ENCODE measurements at regions of chr19 and their contacts with region 1.

Region 1: DNA sequence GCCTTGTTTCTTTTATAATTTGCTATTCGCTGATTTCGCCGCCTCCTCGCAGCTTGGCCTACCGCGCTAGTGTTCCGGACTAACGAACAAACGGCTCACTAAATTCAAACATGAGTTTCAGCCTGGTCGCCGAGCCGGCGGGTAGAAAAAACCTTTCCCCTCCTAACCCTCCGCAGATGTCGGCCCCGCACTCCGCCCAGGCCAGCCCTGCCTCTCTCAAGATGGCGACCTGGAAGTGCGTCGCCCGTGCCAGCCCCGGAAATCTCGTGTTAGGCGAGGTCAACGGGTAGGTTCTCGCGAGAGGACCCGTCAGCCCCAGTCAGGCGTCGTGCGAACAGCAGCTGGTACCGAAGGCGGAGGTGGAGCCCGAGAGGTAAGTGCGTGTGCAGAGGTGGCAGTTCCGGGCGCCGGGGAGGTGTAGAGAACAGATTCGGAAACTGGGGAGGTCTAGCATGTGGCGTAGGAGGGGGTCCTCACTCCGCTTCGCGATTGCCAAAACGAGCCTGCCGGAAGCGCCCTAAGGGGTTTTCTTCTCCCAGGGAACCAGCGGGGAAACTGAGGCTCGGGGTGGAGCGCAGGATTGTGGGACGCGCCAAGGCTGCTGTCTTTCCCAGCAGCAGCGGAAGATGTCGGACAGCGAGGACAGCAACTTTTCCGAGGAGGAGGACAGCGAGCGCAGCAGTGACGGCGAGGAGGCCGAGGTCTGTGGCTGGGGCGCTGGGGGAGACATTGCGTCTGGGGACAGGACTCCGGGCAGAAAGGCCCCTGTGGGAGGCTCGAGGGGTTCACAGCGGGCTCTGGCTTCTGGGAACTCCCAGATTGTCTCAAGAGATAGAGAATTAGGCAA is at the start of gene SUPT5H:
- DNase-seq: peak; percentile 97 to 98 (median 97)
- ATAC-seq: peak; percentile 98 to 99 (median 98)
- H3K4me3 ChIP-seq: peak within 1 kb of the TSS; percentile 65 to 98 (median 86)
- H3K27ac ChIP-seq: peak within 1 kb of the TSS; percentile 86 to 96 (median 92)
- H3K4me1 ChIP-seq: peaks cover 8 to 51% (median 36%) of the 10 kb centered on the region in 12 donors
- H3K27me3 ChIP-seq: no peaks in the 10 kb centered on the region
- CTCF ChIP-seq: peak in 1 of 12 donors; percentile 12
- POLR2A ChIP-seq: peak; percentile 34 to 91
- total RNA-seq, gene SUPT5H: 64.2 to 113 (median 81.7) TPM

Region 2: DNA sequence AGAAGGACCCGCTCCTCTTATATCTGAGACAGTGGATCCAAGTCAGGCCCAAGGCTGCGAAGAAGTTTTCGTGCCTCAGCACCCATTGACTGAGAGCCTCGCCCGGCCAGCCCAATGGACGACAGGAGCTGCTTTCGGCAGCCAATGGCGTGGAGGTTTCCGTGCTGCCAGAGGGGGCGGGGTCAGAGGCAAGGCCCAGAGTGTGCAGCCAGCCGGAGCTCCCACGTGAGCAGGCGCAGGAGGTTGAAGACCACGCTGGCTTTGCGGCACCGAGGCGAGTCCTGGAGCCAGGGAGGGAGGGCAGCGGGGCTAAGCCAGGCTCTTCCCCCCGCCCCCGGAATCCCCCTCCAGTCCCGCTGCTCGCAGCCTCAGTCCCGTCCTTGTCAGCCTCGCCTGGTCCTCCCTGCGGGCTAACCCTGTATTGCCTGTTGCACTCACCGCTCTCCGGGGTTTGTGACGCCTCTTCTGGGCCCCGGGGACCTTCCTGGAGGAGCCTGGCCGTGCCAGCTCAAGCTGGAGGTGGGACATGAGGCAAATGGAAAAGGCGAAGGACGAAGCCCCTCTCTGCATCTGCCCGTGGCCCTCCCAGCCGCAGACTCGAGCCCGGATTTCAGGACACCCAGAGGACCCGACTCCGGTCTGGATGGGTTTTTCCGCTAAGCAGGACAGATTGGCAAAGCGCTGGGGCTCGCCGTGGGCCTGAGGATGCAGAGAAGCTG is 198.4 kb before region 1 on chr19:
- intact Hi-C with region 1: no loop called
- DNase-seq: no peak
- ATAC-seq: peak in 2 of 4 donors; percentile 41 to 73
- H3K4me3 ChIP-seq: peak overlapping the region in 1 of 12 donors; percentile 18
- H3K27ac ChIP-seq: no peak overlapping the region
- H3K4me1 ChIP-seq: peaks cover 0 to 14% (median 1%) of the 10 kb centered on the region in 12 donors
- H3K27me3 ChIP-seq: peaks cover 19 to 68% (median 38%) of the 10 kb centered on the region in 9 donors
- CTCF ChIP-seq: no peak
- POLR2A ChIP-seq: no peak

Region 3: DNA sequence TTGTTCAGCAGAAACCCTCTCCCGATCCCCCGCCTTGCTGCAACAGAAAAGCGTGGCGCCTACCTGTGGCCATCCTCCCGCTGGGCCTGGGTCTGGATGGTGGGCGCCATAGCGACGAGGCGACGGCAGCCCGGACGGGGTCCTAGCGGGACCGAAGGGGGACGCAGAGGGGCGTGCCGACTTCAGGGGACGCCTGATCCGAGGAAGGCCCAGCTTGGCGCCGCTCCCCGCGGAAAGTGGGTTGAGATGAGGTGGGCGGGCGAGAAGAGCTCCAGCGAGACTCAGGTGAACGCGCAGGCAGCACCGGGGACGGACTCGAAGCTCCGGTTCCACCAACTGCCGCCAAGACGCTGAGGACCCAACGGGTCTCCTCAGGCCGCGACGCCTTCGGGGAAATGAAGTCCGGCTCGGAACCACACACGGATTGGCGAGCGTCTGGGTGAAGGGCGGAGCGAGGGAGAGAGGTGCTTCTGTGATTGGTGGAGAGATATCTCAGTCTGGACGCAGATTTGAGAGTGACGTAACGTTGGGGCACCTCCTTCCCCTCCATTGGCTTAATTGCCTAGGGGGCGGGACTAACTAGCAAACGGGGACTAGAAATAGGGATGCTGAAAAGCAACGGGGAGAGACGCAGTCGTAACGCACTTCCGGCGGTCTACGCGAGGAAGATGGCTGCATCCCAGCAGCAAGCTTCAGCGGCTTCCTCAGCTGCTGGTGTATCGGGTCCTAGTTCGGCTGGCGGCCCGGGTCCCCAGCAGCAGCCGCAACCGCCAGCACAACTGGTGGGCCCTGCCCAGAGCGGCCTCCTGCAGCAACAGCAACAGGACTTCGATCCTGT is 54.5 kb before region 1 on chr19 and contains the starts of genes MED29 and PAF1:
- intact Hi-C with region 1: loop called in 2 of 10 experiments (anchors 10 kb)
- DNase-seq: peak; percentile 97 to 99 (median 98)
- ATAC-seq: peak; percentile 95 to 99 (median 96)
- H3K4me3 ChIP-seq: peak within 1 kb of the TSS; percentile 74 to 99 (median 94)
- H3K27ac ChIP-seq: peak within 1 kb of the TSS; percentile 94 to 100 (median 98)
- H3K4me1 ChIP-seq: peaks cover 3 to 25% (median 19%) of the 10 kb centered on the region in 12 donors
- H3K27me3 ChIP-seq: no peaks in the 10 kb centered on the region
- CTCF ChIP-seq: peak in 1 of 12 donors; percentile 26
- POLR2A ChIP-seq: peak; percentile 49 to 89
- total RNA-seq, gene MED29: 26.3 to 53.0 (median 34.1) TPM
- total RNA-seq, gene PAF1: 32.8 to 75.7 (median 40.7) TPM

Region 4: DNA sequence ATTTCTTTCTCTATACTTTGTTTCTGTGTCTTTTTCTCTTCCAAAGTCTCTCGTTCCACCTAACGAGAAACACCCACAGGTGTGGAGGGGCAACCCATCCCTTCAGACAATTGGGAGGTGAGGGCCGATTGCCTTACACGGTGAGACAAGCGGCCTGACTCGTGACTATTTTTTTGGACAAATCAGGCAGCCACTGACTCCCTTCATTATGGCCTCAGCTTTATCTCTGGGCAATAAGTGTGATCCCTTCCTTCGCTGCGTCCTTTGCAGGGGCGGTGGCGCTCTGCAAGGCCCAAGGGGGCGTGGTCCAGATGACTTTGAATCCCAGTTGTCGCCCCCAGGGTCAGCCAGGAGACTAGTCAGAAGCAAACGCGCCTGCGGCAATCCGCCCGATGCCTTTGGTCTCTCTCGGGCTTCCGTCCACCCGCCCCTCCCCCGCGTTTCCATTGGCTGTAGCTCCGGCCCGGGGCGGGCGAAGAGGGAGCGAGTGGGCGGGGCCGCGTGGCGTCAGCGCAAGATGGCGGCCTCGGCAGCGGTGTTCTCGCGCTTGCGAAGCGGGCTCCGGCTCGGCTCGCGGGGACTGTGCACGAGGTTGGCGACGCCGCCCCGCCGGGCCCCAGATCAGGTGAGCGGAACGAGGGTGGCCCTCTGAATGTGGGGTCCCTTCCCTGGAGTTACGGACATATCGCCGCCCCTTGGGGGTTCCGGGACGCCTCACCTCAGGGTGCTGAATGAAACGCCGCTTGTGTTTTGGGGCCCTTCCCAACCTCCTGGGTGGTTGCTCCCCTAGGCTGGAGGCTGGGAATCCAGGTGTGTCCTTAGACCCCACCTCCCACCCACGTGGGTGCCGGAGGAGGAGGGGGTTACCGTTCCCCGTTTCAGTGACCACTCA is 35.1 kb after region 1 on chr19 and contains the start of gene TIMM50:
- intact Hi-C with region 1: no loop called
- DNase-seq: peak; percentile 98 to 99 (median 98)
- ATAC-seq: peak; percentile 95 to 99 (median 98)
- H3K4me3 ChIP-seq: peak within 1 kb of the TSS; percentile 75 to 100 (median 90)
- H3K27ac ChIP-seq: peak within 1 kb of the TSS; percentile 4 to 89 (median 82)
- H3K4me1 ChIP-seq: peaks cover 0 to 24% (median 16%) of the 10 kb centered on the region in 12 donors
- H3K27me3 ChIP-seq: no peaks in the 10 kb centered on the region
- CTCF ChIP-seq: peak in 1 of 12 donors; percentile 19
- POLR2A ChIP-seq: peak in 1 of 2 donors; percentile 63
- total RNA-seq, gene TIMM50: 66.0 to 91.3 (median 77.3) TPM

Region 5: DNA sequence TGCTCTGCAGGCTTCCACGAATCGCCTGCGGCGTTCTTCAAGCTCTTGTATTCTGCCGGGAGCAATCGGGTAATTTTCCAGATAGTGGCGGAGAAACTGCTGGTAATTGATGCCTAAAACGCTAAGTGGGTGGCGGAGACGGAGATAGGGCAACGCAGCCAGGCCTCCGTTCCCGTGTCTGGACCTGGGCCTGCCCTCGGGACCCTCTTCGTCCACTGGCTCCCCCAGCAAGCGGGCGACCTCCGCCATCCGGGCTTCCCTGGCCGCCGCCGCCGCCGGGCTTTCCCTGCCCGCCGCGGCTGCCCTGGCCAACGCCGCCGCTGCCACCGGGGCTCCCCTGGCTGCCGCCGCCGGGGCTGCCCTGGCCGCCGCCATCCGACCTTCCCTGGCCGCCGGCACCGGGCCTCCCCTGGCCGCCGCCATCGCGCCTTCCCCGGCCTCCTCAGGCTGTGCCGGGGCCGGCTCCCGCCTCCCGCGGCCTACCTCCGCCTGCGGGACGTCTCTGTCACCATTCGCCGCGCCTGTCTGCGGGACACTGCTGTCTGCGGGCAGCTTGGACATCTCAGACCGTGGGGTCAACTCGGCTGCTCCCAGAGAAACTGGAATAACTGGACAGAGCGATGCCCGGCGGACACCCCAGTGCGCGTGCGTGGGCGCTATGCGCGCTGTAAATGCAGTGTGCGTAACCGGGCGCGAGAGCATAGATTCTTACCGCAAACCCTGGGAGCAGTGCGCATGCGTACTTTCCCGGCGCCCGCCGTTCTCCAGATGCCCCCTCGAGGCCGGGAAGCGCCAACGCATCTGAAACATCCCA is 94.2 kb after region 1 on chr19 and contains the start of gene EID2:
- intact Hi-C with region 1: loop called in 4 of 10 experiments (anchors 2 to 10 kb)
- DNase-seq: peak; percentile 95 to 98 (median 97)
- ATAC-seq: peak; percentile 94 to 99 (median 98)
- H3K4me3 ChIP-seq: peak within 1 kb of the TSS; percentile 56 to 98 (median 81)
- H3K27ac ChIP-seq: peak within 1 kb of the TSS; percentile 85 to 98 (median 94)
- H3K4me1 ChIP-seq: peaks cover 0 to 24% (median 18%) of the 10 kb centered on the region in 12 donors
- H3K27me3 ChIP-seq: no peaks in the 10 kb centered on the region
- CTCF ChIP-seq: peak; percentile 78 to 97 (median 85)
- POLR2A ChIP-seq: peak in 1 of 2 donors; percentile 92
- total RNA-seq, gene EID2: 7.1 to 14.6 (median 12.6) TPM